ENCODE measurements at regions of chr6 and their contacts with region 1.

Region 1: GRCh38 chr6:117346142-117346930 is 79.4 kb downstream of the ROS1 start:
- DNase-seq: peak; percentile 16
- H3K4me3 Mint-ChIP-seq: no peak overlapping the region
- H3K27ac Mint-ChIP-seq: no peak overlapping the region
- H3K4me1 Mint-ChIP-seq: peaks cover 6% of the 10 kb centered on the region
- H3K27me3 Mint-ChIP-seq: no peaks in the 10 kb centered on the region
- CTCF ChIP-seq: peak; percentile 38

Region 2: GRCh38 chr6:117359581-117359980 is 13.2 kb after region 1 on chr6:
- CTCF ChIA-PET with region 1: no interaction called
- POLR2A ChIA-PET with region 1: no interaction called
- intact Hi-C with region 1: no loop called
- DNase-seq: no peak
- H3K4me3 Mint-ChIP-seq: no peak overlapping the region
- H3K27ac Mint-ChIP-seq: no peak overlapping the region
- H3K4me1 Mint-ChIP-seq: no peaks in the 10 kb centered on the region
- H3K27me3 Mint-ChIP-seq: no peaks in the 10 kb centered on the region
- CTCF ChIP-seq: no peak

Region 3: DNA sequence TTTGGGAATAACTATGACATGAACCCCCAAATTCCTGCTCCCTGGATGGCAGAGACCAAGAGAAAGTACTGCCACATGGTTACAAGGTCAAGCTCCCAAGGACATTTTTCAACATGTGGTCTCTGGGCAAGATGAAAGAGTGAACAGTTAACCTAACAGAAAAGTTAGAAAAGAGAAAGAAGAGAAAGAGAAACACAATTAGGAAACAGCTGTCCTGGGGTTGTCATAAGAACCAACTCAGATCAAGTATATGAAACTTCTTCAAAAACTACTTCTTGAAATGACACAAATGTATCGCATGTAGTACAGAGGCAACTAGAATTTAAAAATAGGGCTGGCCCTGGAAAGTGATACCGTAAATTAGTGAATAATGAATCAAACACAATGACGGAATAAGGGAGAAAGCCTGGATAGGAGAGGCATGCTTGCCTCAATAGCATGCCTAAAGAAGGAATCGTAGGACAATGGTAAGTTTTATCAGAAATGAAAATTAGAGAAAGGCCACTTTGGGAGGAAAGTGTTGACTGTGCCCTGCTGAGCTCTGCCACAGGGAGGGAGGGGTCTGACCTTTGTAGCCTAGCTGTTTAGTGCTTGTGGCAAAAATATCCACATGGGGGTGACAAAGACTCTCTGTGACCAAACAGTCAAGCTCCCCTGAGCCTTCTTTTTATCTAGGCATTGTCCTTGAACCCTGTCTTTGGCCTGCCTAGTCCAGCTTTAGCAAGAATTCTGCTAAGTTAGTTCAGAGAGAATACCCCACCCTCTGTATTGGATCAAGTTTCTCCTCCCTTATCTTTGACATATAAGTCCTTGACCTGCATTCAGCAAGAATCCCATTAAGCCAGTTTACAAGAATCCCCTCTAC is 131.9 kb after region 1 on chr6:
- CTCF ChIA-PET with region 1: no interaction called
- POLR2A ChIA-PET with region 1: no interaction called
- intact Hi-C with region 1: no loop called
- DNase-seq: peak; percentile 51
- H3K4me3 Mint-ChIP-seq: no peak overlapping the region
- H3K27ac Mint-ChIP-seq: no peak overlapping the region
- H3K4me1 Mint-ChIP-seq: no peaks in the 10 kb centered on the region
- H3K27me3 Mint-ChIP-seq: no peaks in the 10 kb centered on the region
- CTCF ChIP-seq: peak; percentile 16

Region 4: DNA sequence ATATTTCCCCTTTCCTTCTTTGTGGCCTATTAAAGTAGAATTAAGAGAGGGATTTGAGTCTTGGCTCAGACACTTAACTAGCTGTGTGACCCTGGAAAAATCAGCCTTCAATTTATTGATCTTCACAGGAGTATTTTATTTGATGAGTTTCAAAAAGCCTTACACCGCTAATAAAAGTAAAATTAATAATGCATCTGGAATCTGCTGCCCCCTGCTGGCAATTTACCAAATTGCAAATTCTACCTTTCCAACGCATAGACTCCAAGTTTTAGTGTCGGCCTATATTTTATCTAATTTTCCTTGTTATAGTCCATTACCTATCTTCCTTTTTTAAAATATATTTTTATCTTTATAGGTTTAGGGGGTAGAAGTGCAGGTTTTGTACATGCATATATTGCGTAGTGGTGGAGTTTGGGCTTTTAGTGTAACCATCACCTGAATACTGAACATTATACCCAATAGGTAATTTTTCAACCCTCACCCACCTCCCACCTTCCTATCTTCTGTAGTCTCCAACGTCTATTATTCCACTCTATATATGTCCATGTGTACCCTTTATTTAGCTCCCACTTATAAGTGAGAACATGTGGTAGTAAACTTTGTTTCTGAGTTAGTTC is 209.7 kb after region 1 on chr6:
- CTCF ChIA-PET with region 1: interaction called, 3 read pairs
- POLR2A ChIA-PET with region 1: no interaction called
- intact Hi-C with region 1: loop called (anchors 2 kb)
- DNase-seq: peak; percentile 67
- H3K4me3 Mint-ChIP-seq: no peak overlapping the region
- H3K27ac Mint-ChIP-seq: no peak overlapping the region
- H3K4me1 Mint-ChIP-seq: peaks cover 22% of the 10 kb centered on the region
- H3K27me3 Mint-ChIP-seq: no peaks in the 10 kb centered on the region
- CTCF ChIP-seq: peak; percentile 75

Region 5: GRCh38 chr6:118495485-118496280 is 1149.3 kb after region 1 on chr6:
- CTCF ChIA-PET with region 1: no interaction called
- POLR2A ChIA-PET with region 1: no interaction called
- intact Hi-C with region 1: no loop called
- DNase-seq: peak; percentile 34
- H3K4me3 Mint-ChIP-seq: no peak overlapping the region
- H3K27ac Mint-ChIP-seq: no peak overlapping the region
- H3K4me1 Mint-ChIP-seq: peaks cover 7% of the 10 kb centered on the region
- H3K27me3 Mint-ChIP-seq: no peaks in the 10 kb centered on the region
- CTCF ChIP-seq: no peak

Measured in MCF 10A (cell line).